ENCODE measurements at regions of chr1 and their contacts with region 1.

Region 1: GRCh38 chr1:91021686-91022517 is at the start of gene ZNF644:
- DNase-seq: peak; percentile 88 to 99 (median 92)

Region 2: DNA sequence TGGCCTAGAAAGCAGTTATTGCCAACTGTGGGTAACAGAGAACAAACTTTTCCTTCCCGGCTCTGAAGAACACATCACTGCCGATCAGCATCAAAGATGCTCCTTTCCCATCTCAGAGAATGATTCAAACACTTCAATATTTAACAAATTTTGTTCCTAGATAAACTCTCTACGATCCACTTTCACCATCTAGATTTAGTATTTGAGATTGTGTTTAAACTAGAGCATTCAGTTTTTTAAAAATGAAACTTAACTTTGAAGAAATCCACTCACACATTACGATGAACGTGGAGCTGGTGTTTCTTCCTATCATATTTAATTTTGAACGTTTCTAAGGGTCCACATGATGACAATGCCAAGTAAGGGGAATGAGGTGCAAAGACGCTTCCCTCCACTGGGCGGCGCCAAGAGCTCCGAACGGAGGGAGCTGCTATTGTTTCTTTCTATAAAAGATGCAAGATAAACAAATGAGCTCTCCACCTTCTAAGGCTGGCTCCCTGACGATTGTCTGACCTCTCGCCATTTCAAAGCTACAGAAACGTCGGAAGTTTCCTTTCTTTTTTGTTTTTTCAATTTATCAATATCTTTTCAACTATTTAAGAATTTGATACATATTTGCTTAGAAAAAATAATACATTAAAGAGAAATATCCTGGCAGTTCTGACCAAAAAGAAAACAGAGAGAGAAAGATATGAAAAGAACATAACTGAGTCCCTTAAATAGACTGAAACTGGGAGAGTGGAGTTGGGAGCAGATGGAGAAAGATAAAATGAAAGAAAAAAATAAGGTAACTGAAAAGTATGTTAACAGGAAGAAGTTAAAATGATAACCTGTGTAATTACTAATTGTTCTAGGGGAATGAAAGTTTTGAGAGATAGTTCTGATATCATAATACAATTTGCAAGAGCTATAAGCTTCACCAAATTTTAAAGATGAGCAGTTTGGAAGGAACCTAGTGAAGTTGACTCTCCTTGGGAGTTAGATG is 300.4 kb before region 1 on chr1:
- intact Hi-C with region 1: loop called (anchors 5 kb)
- DNase-seq: peak in 3 of 10 donors; percentile 15 to 88 (median 66)

Region 3: GRCh38 chr1:90850898-90851710 is 170.8 kb before region 1 on chr1:
- intact Hi-C with region 1: loop called (anchors 10 kb)
- DNase-seq: peak; percentile 51 to 96 (median 76)